Posterior vena cava (tissue), 2 donors: ENCODE measurements at regions of chr9 and their contacts with region 1.

Region 1: DNA sequence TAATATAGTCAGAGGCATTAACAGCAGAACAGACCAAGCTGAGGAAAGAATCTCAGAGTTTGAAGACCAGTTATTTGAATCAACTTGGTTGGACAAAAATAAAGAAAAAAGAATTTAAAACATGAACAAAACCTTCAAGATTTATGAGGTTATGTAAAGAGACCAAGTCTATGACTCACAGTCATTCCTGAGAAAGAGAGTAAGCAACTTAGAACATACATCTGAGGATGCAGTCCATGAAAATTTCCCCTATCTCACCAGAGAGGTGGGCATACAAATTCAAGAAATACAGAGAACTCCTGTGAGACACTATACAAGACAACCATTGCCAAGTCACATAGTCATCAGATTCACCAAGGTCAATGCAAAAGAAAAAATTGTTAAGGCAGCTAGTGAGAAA is 17.4 kb upstream of the C9orf72 start:
- DNase-seq: no peak

Region 2: DNA sequence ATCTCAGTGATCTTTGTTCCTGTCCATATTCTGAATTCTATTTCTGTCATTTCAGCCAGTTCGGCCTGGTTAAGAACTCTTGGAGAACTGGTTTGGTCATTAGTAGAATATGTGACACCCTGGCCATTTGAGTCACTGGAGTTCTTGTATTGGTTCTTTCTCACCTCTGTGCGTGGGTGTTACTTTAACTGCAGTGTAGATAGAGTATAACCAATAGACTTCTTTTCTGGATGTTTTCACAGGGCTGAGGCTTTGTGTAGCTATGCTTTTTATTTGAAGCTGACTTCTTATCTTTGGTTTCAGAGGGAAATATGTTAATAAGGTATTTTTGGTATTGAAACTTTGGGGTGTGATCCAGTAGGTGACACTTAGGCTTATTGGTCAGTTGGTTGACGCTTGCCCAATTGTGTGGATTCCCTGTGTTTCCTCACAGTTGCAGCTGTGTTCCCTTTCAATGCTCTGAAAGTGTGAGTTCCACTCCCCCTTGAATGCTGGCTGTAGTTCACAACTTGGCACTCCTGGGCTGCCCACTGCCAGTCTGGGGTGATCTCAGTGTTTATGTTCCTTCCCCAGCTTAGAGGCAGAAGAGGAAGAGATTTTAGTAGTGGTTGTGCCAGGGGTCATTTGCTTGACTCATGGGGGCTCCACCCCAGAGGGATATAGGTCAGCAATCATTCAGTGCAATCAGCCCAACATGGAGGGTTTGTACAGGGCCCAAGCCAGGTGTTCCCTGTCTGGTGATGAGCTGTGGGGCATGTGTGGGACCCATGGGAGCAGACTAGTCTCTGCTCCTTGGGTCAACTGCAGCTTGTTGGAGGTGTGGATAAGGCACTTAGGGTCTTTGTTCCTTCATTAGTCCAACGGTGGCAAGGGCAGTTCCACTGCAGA is 516.6 kb before region 1 on chr9:
- intact Hi-C with region 1: loop called in 1 of 2 experiments (anchors 5 kb)
- DNase-seq: no peak